ENCODE measurements at regions of chr1 and their contacts with region 1.

Region 1: GRCh38 chr1:180527101-180527669 is 24.8 kb upstream of the ACBD6 start:
- DNase-seq: no peak
- H3K4me3 ChIP-seq: no peak overlapping the region
- H3K27ac ChIP-seq: peak overlapping the region; percentile 80 to 83
- H3K4me1 ChIP-seq: peaks cover 13 to 37% of the 10 kb centered on the region in 2 donors
- H3K27me3 ChIP-seq: no peaks in the 10 kb centered on the region
- CTCF ChIP-seq: no peak

Region 2: GRCh38 chr1:180563026-180563827 is 36.0 kb after region 1 on chr1:
- intact Hi-C with region 1: loop called (anchors 5 kb)
- DNase-seq: no peak
- H3K4me3 ChIP-seq: no peak overlapping the region
- H3K27ac ChIP-seq: peak overlapping the region; percentile 47 to 76
- H3K4me1 ChIP-seq: peaks cover 8 to 25% of the 10 kb centered on the region in 2 donors
- H3K27me3 ChIP-seq: no peaks in the 10 kb centered on the region
- CTCF ChIP-seq: no peak

Region 3: DNA sequence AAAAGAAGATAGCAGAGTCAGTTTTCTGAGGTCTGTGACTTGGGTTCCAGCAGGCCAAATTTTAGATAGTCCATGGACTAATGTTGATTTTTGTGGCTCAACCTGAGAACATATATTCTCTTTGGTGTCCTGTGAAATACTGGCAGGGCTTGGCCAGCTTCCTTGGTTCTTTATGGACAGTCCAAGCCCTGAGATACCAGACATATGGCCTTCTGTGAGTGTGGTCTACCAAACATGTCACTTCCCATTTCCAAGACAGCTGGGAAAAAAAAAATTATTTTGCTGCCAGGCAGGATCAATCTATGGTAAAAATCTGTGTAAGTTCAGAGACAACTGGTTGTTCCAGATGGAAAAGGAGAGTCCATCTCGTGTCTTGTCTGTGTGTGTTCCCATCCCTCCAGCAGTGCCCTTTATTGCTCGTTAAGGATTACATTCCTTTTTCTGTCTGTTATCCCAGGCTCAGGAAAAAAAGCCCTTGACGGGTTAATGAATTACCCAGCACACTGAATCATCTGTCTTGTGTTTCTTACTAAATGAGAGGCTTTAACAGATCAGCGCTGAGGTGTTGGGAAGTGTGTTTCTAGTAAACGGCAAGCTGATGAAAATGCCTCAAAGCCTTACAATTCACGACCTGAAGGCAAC is 71.3 kb after region 1 on chr1:
- intact Hi-C with region 1: no loop called
- DNase-seq: no peak
- H3K4me3 ChIP-seq: no peak overlapping the region
- H3K27ac ChIP-seq: no peak overlapping the region
- H3K4me1 ChIP-seq: no peaks in the 10 kb centered on the region
- H3K27me3 ChIP-seq: no peaks in the 10 kb centered on the region
- CTCF ChIP-seq: no peak

Region 4: GRCh38 chr1:180623579-180624347 is 96.6 kb after region 1 on chr1:
- intact Hi-C with region 1: no loop called
- DNase-seq: no peak
- H3K4me3 ChIP-seq: no peak overlapping the region
- H3K27ac ChIP-seq: no peak overlapping the region
- H3K4me1 ChIP-seq: no peaks in the 10 kb centered on the region
- H3K27me3 ChIP-seq: no peaks in the 10 kb centered on the region
- CTCF ChIP-seq: peak in 1 of 3 experiments; percentile 22

Region 5: DNA sequence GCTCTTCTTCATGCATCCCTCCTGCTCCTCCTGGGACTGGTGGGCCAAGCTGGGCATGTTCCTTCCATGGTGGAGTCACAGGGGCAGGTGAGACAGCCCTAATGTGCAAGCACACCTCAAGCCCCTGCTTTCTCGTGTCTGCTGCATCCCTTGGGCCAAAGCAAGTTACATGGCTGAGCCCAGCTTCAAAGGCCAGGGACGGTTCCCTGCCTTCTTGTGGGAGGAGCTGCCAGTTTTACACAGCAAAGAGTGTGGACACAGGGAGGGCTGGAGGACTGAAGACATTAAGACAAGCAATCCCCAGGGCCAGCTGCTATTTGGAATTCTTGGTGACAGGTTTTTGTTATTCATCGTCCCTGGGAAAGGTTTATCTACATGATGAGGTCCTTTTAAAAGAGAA is 780.9 kb after region 1 on chr1:
- intact Hi-C with region 1: no loop called
- DNase-seq: no peak
- H3K4me3 ChIP-seq: no peak overlapping the region
- H3K27ac ChIP-seq: no peak overlapping the region
- H3K4me1 ChIP-seq: no peaks in the 10 kb centered on the region
- H3K27me3 ChIP-seq: no peaks in the 10 kb centered on the region
- CTCF ChIP-seq: no peak